Naive thymus-derived CD4-positive, alpha-beta T cell (primary cell): ENCODE measurements at regions of chr6 and their contacts with region 1.

Region 1: DNA sequence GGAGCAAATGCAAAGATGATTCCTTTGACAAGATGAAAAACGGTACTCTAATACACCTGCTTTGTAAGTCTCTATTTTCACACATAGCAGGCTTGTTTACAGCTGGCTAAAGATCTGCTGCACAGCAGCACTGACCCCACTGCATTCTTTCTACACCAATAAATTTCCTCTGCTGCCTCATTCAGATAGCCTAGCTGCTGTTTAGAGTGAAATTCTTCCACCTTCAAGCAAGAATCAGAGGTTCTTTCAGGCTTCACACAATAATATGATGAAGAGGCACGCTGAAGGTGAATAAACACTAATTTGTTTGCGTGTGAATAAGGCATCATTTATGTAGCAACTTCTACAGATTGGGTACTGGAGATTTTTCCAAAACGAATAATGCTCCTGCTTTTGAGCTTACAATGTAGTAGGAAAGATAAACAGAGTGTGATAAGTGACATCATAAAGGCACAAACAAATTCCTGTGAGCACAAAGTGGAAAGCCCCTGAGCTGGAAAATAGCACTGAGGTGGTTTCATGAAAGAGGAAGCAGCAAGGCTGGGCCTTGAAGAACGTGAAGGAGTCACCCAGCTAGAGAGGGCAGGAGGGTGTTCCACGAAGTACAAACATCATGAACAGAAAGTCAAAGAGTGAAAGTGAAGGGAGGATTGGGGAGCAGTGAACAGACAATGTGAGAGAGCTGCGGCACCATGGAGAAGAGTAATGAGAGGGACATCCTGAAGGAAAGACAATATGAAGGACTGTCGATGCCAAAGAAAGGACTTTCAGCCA is 543.4 kb downstream of the CD83 start:
- DNase-seq: peak in 8 of 9 donors; percentile 41 to 77 (median 58)
- ATAC-seq: peak; percentile 84
- H3K4me3 ChIP-seq: no peak overlapping the region
- H3K4me3 Mint-ChIP-seq: no peak overlapping the region
- H3K27ac ChIP-seq: peak overlapping the region; percentile 58
- H3K27ac Mint-ChIP-seq: no peak overlapping the region
- H3K4me1 ChIP-seq: peaks cover 14 to 56% of the 10 kb centered on the region in 2 donors
- H3K4me1 Mint-ChIP-seq: peaks cover 31 to 48% (median 36%) of the 10 kb centered on the region in 7 donors
- H3K27me3 ChIP-seq: no peaks in the 10 kb centered on the region
- H3K27me3 Mint-ChIP-seq: peaks cover 0 to 18% (median 0%) of the 10 kb centered on the region in 5 donors

Region 2: DNA sequence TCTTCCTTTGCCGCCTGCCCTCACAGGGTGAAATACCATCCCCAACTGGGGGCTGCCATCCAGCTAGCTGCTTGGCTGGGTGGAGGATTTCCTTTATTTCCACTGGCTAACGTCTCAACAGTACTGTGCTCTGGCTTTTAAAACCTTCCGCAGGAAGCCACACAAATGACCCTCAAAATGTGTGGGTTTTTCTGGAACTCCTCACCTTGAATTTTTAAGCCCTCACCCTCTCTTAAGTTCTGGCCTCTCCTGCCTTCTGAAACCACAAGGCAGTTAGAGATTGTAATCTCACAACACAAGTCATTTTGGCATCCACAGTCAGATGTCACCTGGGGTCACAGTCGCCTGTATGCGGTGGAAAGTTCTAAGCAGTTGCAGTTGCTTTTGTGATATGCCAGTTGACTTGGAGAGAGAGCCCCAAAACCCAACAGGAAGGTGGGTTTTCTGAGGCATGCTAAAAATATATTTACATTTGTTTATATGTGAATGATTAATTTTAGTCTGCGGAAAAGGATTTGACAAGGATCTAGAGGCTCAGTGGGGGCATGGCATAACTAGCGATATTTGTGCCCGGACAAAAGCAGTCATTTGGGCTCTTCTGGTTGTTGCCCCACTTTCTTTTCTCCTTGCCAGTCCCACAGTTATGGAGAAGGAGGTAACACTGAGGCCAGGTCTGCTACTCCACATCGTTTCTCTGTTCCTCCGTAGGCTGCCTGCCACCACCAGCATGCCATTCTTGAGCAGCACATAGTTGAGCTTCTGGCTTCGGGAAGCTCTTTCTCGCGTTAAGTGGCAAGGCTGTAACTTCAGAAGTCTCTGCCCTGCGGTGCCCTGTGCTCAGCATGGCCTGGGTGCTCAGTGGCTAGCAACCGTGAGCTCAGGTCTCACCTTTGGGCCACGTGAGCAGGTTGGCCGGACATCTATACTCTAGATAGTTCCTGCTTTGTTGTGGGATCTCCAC is 208.1 kb before region 1 on chr6:
- CTCF ChIA-PET with region 1: no interaction called
- POLR2A ChIA-PET with region 1: interaction called, 5 read pairs
- intact Hi-C with region 1: loop called (anchors 1 to 5 kb)
- DNase-seq: peak in 8 of 9 donors; percentile 22 to 66 (median 50)
- ATAC-seq: peak; percentile 77
- H3K4me3 ChIP-seq: peak overlapping the region; percentile 35
- H3K4me3 Mint-ChIP-seq: peak overlapping the region; percentile 56 to 81 (median 72)
- H3K27ac ChIP-seq: no peak overlapping the region
- H3K27ac Mint-ChIP-seq: peak overlapping the region; percentile 33 to 82 (median 68)
- H3K4me1 ChIP-seq: peaks cover 23 to 41% of the 10 kb centered on the region in 2 donors
- H3K4me1 Mint-ChIP-seq: peaks cover 45 to 73% (median 64%) of the 10 kb centered on the region in 7 donors
- H3K27me3 ChIP-seq: no peaks in the 10 kb centered on the region
- H3K27me3 Mint-ChIP-seq: no peaks in the 10 kb centered on the region

Region 3: GRCh38 chr6:14638906-14639761 is 21.9 kb before region 1 on chr6:
- CTCF ChIA-PET with region 1: interaction called, 3 read pairs
- POLR2A ChIA-PET with region 1: interaction called, 7 read pairs
- intact Hi-C with region 1: loop called (anchors 1 kb)
- DNase-seq: no peak
- ATAC-seq: peak; percentile 54
- H3K4me3 ChIP-seq: no peak overlapping the region
- H3K4me3 Mint-ChIP-seq: peak overlapping the region in 1 of 10 donors; percentile 14
- H3K27ac ChIP-seq: no peak overlapping the region
- H3K27ac Mint-ChIP-seq: peak overlapping the region in 2 of 9 donors; percentile 25 to 46
- H3K4me1 ChIP-seq: peaks cover 27 to 29% of the 10 kb centered on the region in 2 donors
- H3K4me1 Mint-ChIP-seq: peaks cover 41 to 63% (median 52%) of the 10 kb centered on the region in 7 donors
- H3K27me3 ChIP-seq: no peaks in the 10 kb centered on the region
- H3K27me3 Mint-ChIP-seq: peaks cover 0 to 25% (median 4%) of the 10 kb centered on the region in 5 donors

Region 4: GRCh38 chr6:14711056-14711703 is 50.2 kb after region 1 on chr6:
- CTCF ChIA-PET with region 1: no interaction called
- POLR2A ChIA-PET with region 1: no interaction called
- intact Hi-C with region 1: no loop called
- DNase-seq: peak in 6 of 9 donors; percentile 18 to 59 (median 26)
- ATAC-seq: peak; percentile 91
- H3K4me3 ChIP-seq: no peak overlapping the region
- H3K4me3 Mint-ChIP-seq: peak overlapping the region in 1 of 10 donors; percentile 27
- H3K27ac ChIP-seq: no peak overlapping the region
- H3K27ac Mint-ChIP-seq: peak overlapping the region in 2 of 9 donors; percentile 7 to 78
- H3K4me1 ChIP-seq: no peaks in the 10 kb centered on the region
- H3K4me1 Mint-ChIP-seq: peaks cover 5 to 24% (median 6%) of the 10 kb centered on the region in 7 donors
- H3K27me3 ChIP-seq: no peaks in the 10 kb centered on the region
- H3K27me3 Mint-ChIP-seq: peaks cover 0 to 4% (median 0%) of the 10 kb centered on the region in 5 donors

Region 5: GRCh38 chr6:14747881-14748520 is 87.0 kb after region 1 on chr6:
- CTCF ChIA-PET with region 1: no interaction called
- POLR2A ChIA-PET with region 1: no interaction called
- intact Hi-C with region 1: no loop called
- DNase-seq: no peak
- ATAC-seq: no peak
- H3K4me3 ChIP-seq: no peak overlapping the region
- H3K4me3 Mint-ChIP-seq: peak overlapping the region in 1 of 10 donors; percentile 11
- H3K27ac ChIP-seq: no peak overlapping the region
- H3K27ac Mint-ChIP-seq: no peak overlapping the region
- H3K4me1 ChIP-seq: peaks cover 0 to 7% of the 10 kb centered on the region in 2 donors
- H3K4me1 Mint-ChIP-seq: peaks cover 0 to 47% (median 9%) of the 10 kb centered on the region in 7 donors
- H3K27me3 ChIP-seq: no peaks in the 10 kb centered on the region
- H3K27me3 Mint-ChIP-seq: peaks cover 0 to 11% (median 2%) of the 10 kb centered on the region in 5 donors

Region 6: GRCh38 chr6:14876778-14877613 is 216.0 kb after region 1 on chr6:
- CTCF ChIA-PET with region 1: no interaction called
- POLR2A ChIA-PET with region 1: no interaction called
- intact Hi-C with region 1: loop called in 1 of 2 experiments (anchors 5 kb)
- DNase-seq: peak in 8 of 9 donors; percentile 1 to 65 (median 34)
- ATAC-seq: peak; percentile 88
- H3K4me3 ChIP-seq: peak overlapping the region; percentile 25
- H3K4me3 Mint-ChIP-seq: peak overlapping the region; percentile 52 to 80 (median 66)
- H3K27ac ChIP-seq: peak overlapping the region; percentile 2
- H3K27ac Mint-ChIP-seq: peak overlapping the region; percentile 43 to 92 (median 79)
- H3K4me1 ChIP-seq: peaks cover 15 to 16% of the 10 kb centered on the region in 2 donors
- H3K4me1 Mint-ChIP-seq: peaks cover 26 to 55% (median 35%) of the 10 kb centered on the region in 7 donors
- H3K27me3 ChIP-seq: no peaks in the 10 kb centered on the region
- H3K27me3 Mint-ChIP-seq: no peaks in the 10 kb centered on the region

Region 7: DNA sequence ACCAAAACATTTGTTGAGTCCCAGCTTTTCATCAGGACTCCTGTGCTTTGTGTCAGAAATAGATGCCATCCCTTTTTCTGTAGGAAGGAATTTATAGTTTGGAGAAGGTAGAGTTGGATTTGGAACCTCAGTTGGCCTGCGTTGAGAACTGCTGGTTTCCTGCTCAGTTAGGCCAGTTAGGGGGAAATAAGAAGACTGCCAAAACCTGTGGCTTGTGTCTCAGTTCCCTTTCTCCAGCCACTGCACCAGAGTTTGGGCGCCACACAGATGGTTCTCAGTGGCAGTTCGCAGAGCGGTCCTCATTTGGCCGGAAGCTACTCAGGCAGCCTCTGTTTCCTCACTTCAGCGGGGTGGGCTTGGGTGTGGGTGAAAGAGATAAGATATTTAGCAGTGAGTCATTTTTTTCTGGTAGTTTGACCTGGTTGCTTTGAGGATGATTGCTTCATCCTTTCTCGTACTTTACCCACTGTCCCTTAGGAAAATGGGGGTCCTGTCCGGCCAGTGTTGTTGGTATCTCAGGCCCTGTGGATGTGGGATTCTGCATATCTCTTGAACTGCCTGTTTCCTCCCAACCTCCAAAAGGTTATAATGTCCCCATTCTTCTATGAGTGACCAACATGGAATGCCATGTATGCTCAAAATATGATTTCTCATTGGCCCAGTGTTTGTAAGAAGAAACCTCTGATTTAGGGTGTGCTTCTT is 638.6 kb after region 1 on chr6:
- CTCF ChIA-PET with region 1: no interaction called
- POLR2A ChIA-PET with region 1: no interaction called
- intact Hi-C with region 1: loop called in 1 of 2 experiments (anchors 2 kb)
- DNase-seq: no peak
- ATAC-seq: peak; percentile 78
- H3K4me3 ChIP-seq: no peak overlapping the region
- H3K4me3 Mint-ChIP-seq: peak overlapping the region; percentile 7 to 58 (median 31)
- H3K27ac ChIP-seq: no peak overlapping the region
- H3K27ac Mint-ChIP-seq: peak overlapping the region in 7 of 9 donors; percentile 5 to 80 (median 69)
- H3K4me1 ChIP-seq: peaks cover 34 to 44% of the 10 kb centered on the region in 2 donors
- H3K4me1 Mint-ChIP-seq: peaks cover 65 to 87% (median 76%) of the 10 kb centered on the region in 7 donors
- H3K27me3 ChIP-seq: no peaks in the 10 kb centered on the region
- H3K27me3 Mint-ChIP-seq: no peaks in the 10 kb centered on the region